PC-9 (cell line): ENCODE measurements at regions of chr1 and their contacts with region 1.

Region 1: DNA sequence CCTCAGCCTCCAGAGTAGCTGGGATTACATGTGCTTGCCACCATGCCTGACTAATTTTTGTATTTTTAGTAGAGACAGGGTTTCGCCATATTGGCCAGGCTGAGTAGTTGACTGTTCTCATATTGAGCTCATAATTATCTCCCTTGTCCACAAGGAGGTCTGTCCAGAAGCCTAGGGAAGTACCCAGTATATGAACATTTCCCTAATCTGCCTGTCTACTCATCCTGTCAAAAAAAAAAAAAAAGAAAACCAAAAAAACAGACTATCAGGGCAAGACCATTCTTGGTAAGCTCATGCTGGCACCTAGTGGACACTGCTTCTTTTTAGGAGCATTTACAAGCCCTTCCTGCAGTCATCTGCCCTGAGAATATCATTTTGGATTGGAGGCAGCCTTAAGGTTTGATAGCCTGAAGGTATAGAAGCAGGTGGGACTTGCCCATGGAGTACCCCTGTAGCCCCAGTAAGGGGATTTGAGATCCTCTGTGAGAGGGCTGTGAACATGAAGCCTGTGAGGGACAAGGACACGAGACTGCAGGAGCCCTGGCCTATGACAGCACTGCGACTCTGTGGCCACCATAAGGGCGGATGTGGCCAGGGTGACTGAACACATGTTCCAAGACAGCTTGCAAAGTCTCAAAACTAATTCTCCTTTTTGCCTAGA is 10.8 kb upstream of the DUSP12 start:
- DNase-seq: peak; percentile 48 to 70
- H3K4me3 ChIP-seq: no peak overlapping the region
- H3K27ac ChIP-seq: no peak overlapping the region
- H3K4me1 ChIP-seq: peaks cover 37% of the 10 kb centered on the region
- H3K27me3 ChIP-seq: no peaks in the 10 kb centered on the region
- CTCF ChIP-seq: peak; percentile 76

Region 2: GRCh38 chr1:161209790-161210409 is 528.9 kb before region 1 on chr1:
- CTCF ChIA-PET with region 1: no interaction called
- POLR2A ChIA-PET with region 1: no interaction called
- intact Hi-C with region 1: loop called (anchors 5 kb)
- DNase-seq: peak; percentile 43 to 79
- H3K4me3 ChIP-seq: no peak overlapping the region
- H3K27ac ChIP-seq: no peak overlapping the region
- H3K4me1 ChIP-seq: no peaks in the 10 kb centered on the region
- H3K27me3 ChIP-seq: no peaks in the 10 kb centered on the region
- CTCF ChIP-seq: peak; percentile 94

Region 3: GRCh38 chr1:161486806-161487741 is 251.7 kb before region 1 on chr1:
- CTCF ChIA-PET with region 1: interaction called, 6 read pairs
- POLR2A ChIA-PET with region 1: no interaction called
- intact Hi-C with region 1: loop called (anchors 1 kb)
- DNase-seq: peak; percentile 39 to 46
- H3K4me3 ChIP-seq: no peak overlapping the region
- H3K27ac ChIP-seq: no peak overlapping the region
- H3K4me1 ChIP-seq: no peaks in the 10 kb centered on the region
- H3K27me3 ChIP-seq: peaks cover 25% of the 10 kb centered on the region
- CTCF ChIP-seq: peak; percentile 87

Region 4: DNA sequence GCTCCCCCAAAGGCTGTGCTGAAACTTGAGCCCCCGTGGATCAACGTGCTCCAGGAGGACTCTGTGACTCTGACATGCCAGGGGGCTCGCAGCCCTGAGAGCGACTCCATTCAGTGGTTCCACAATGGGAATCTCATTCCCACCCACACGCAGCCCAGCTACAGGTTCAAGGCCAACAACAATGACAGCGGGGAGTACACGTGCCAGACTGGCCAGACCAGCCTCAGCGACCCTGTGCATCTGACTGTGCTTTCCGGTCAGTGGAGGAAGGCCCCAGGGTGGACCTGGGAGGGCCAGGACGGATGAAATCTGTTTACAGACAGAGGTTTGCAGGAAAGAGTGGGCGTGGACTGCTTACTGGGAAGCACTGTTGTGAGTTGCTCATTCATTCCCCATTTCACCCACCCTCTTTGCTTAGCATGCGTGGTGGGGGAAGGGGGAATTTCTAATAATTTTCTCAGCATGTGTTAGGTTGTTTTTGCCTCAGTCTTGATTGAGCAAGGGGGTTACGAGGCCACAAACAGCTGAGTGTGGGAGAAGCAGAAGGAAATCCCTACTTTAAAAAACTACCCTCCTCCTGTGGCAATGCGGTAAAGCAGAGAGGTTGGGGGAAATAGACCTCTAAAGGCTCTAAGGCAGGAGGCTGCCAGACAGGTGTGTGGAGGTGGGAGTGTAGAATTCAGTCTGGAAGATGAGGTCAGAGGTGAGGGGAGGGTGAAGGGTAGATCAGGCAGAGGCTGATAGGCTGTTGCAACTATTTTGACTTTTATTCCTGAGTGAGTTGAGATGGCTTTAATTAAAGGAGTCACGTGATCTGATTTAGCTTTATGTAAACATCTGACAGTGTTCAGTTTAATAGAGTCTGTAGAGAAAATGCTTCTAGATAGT is 232.2 kb before region 1 on chr1:
- CTCF ChIA-PET with region 1: no interaction called
- POLR2A ChIA-PET with region 1: interaction called, 17 read pairs
- intact Hi-C with region 1: no loop called
- DNase-seq: no peak
- H3K4me3 ChIP-seq: no peak overlapping the region
- H3K27ac ChIP-seq: no peak overlapping the region
- H3K4me1 ChIP-seq: peaks cover 6% of the 10 kb centered on the region
- H3K27me3 ChIP-seq: no peaks in the 10 kb centered on the region
- CTCF ChIP-seq: no peak

Region 5: DNA sequence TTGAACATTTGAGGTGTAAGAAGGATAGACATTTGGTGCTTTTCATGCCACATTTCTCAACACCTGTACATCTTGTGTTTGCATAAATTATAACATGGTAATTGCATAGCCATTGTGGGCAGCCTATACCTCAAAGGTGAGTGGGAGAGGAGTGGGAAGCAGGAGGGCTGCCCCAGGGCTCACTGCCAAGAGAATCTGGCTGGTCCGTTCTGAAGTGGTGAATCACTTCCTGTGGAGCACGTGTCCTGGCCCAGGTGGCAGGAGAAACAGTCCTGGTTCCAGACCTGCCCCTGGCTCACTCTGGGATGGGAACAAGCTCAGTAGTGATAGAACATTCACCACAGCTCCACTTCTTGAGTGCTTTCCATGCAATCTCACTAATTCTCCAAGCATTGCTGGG is 296.5 kb after region 1 on chr1:
- CTCF ChIA-PET with region 1: interaction called, 14 read pairs
- POLR2A ChIA-PET with region 1: no interaction called
- intact Hi-C with region 1: no loop called
- DNase-seq: peak in 1 of 2 experiments; percentile 27
- H3K4me3 ChIP-seq: no peak overlapping the region
- H3K27ac ChIP-seq: no peak overlapping the region
- H3K4me1 ChIP-seq: 0 out of 2 replicates have a peak, but pooled peaks cover 6% of the 10 kb centered on the region
- H3K27me3 ChIP-seq: no peaks in the 10 kb centered on the region
- CTCF ChIP-seq: no peak